ENCODE measurements at regions of chr16 and their contacts with region 1.

Region 1: DNA sequence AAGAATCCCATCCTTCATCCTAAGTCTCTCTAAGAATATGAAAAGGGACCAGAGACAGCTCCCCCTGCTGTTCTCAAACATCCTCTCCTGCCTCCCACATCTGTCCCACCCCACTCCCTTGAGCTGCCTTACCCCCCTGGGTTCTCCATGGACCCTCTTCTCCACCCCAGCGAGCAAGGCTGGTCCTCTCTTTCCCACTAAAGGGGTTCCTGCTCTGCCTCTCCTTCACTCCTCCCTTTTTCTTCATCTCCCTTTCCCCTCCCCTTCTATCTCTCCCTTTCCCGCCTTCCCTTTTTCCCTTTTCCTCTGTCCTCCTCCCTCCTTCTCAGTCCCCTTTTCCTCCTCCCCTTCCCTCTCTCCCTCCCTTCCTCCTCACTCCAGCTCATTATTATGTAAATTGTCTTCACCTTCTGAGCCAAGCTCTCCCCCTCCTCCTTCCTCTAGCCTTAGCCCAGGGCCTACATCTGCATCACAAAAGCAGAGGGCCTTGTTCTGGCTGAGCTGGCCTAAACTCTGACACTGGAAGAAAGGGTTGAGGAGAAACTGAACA is 90.0 kb downstream of the GNAO1 start:
- DNase-seq: peak in 1 of 2 experiments; percentile 38
- H3K4me3 ChIP-seq: no peak overlapping the region
- H3K4me3 Mint-ChIP-seq: no peak overlapping the region
- H3K27ac Mint-ChIP-seq: no peak overlapping the region
- H3K4me1 ChIP-seq: no peaks in the 10 kb centered on the region
- H3K4me1 Mint-ChIP-seq: no peaks in the 10 kb centered on the region
- H3K27me3 ChIP-seq: no peaks in the 10 kb centered on the region
- H3K27me3 Mint-ChIP-seq: no peaks in the 10 kb centered on the region
- CTCF ChIP-seq: peak; percentile 57 to 68

Region 2: GRCh38 chr16:55214974-55215494 is 1066.3 kb before region 1 on chr16:
- CTCF ChIA-PET with region 1: no interaction called
- POLR2A ChIA-PET with region 1: no interaction called
- intact Hi-C with region 1: no loop called
- DNase-seq: no peak
- H3K4me3 ChIP-seq: no peak overlapping the region
- H3K4me3 Mint-ChIP-seq: no peak overlapping the region
- H3K27ac Mint-ChIP-seq: no peak overlapping the region
- H3K4me1 ChIP-seq: no peaks in the 10 kb centered on the region
- H3K4me1 Mint-ChIP-seq: no peaks in the 10 kb centered on the region
- H3K27me3 ChIP-seq: no peaks in the 10 kb centered on the region
- H3K27me3 Mint-ChIP-seq: peaks cover 4% of the 10 kb centered on the region
- CTCF ChIP-seq: no peak

Region 3: GRCh38 chr16:55592306-55592705 is 689.0 kb before region 1 on chr16:
- CTCF ChIA-PET with region 1: no interaction called
- POLR2A ChIA-PET with region 1: no interaction called
- intact Hi-C with region 1: no loop called
- DNase-seq: no peak
- H3K4me3 ChIP-seq: no peak overlapping the region
- H3K4me3 Mint-ChIP-seq: no peak overlapping the region
- H3K27ac Mint-ChIP-seq: no peak overlapping the region
- H3K4me1 ChIP-seq: no peaks in the 10 kb centered on the region
- H3K4me1 Mint-ChIP-seq: no peaks in the 10 kb centered on the region
- H3K27me3 ChIP-seq: no peaks in the 10 kb centered on the region
- H3K27me3 Mint-ChIP-seq: peaks cover 10% of the 10 kb centered on the region
- CTCF ChIP-seq: no peak

Region 4: DNA sequence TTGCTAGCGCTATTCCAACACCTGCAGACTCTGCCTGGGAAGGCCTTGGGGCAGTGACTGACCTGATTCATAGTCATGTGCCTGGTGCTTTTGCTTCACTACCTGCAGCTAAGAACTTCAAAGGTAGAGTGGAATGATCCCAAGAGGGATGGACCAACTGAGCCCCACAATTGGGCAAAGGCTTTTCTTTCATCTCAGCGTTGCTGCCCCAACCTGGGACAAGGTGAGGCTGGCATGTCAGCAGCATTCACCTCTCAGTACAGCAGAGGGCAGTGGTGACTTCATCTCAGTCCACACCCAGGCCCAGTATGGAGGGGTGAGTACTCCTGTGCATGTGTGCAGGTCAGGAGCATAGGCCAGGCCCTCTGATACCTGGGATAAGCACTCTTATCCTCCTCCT is 239.6 kb before region 1 on chr16:
- CTCF ChIA-PET with region 1: interaction called, 6 read pairs
- POLR2A ChIA-PET with region 1: no interaction called
- intact Hi-C with region 1: loop called (anchors 10 kb)
- DNase-seq: peak; percentile 73 to 84
- H3K4me3 ChIP-seq: no peak overlapping the region
- H3K4me3 Mint-ChIP-seq: no peak overlapping the region
- H3K27ac Mint-ChIP-seq: no peak overlapping the region
- H3K4me1 ChIP-seq: no peaks in the 10 kb centered on the region
- H3K4me1 Mint-ChIP-seq: peaks cover 6% of the 10 kb centered on the region
- H3K27me3 ChIP-seq: no peaks in the 10 kb centered on the region
- H3K27me3 Mint-ChIP-seq: peaks cover 4% of the 10 kb centered on the region
- CTCF ChIP-seq: peak; percentile 57 to 64

Measured in Caco-2 (cell line).